WTC11 (cell line): ENCODE measurements at regions of chr15 and their contacts with region 1.

Region 1: DNA sequence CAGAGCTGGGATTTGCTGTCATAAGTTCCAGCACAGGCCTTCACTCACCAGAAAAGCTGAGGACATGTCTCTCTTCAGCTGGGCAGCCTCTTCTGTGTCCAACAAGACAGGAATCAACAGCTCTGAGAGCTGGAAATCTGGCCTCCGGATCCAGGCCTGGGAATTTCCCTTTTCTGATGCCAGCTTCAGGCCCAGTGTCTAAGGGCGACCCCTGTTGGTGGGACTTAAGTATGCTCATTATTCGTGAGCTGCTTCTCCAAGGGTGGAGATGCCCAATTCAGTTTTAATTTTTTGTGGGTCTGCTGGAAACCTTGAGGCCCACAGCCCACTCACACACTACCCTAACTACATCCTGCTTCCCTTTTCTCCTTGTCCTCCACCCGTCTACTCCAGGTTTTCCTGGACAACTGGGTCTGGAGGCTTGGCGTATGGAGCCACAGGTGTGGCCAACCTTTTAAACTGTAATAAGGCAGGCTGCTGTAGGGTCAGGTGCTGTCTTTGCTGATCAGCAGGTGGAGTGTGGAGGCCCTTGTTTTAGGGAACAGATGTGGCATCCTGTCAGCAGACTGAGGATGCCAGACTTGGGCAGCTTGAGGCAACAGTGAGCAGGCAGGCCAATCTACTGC is 2.6 kb upstream of the CEMIP start:
- DNase-seq: peak; percentile 75
- ATAC-seq: no peak
- H3K4me3 Mint-ChIP-seq: no peak overlapping the region
- H3K27ac Mint-ChIP-seq: no peak overlapping the region
- H3K4me1 Mint-ChIP-seq: peaks cover 11% of the 10 kb centered on the region
- H3K27me3 Mint-ChIP-seq: peaks cover 39% of the 10 kb centered on the region
- CTCF ChIP-seq: peak; percentile 83

Region 2: DNA sequence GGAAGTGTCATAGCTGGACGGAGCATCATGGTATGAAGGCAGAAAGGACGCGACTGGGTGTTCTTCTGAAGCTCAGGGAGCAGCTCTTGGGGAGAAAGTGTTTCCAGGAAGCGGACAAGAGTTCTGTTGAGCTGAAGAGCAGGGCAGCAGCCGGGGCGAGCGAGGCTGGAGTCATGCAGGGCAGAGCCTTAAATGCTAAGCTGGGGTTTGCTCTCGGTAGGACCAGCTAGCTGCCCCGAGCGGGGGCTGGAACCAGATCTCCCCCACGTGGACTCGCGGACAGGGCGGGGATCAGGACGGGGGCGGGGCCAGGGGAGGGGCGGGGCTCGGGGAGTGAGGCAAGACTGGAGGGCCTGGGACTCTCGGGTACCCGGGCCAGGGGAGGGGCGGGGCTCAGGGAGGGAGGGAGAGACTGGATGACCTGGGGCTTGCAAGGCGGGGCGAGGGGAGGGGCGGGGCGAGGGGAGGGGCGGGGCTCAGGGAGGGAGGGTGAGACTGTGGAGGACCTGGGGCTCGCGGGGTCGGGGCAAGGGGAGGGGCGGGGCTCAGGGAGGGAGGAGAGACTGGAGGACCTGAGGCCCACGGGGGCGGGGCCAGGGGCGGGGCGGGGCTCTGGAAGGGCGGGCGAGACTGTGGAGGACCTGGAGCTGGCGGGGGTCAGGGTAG is 624.2 kb before region 1 on chr15:
- CTCF ChIA-PET with region 1: no interaction called
- POLR2A ChIA-PET with region 1: no interaction called
- DNase-seq: peak; percentile 97
- ATAC-seq: peak; percentile 82
- H3K4me3 Mint-ChIP-seq: peak overlapping the region; percentile 78
- H3K27ac Mint-ChIP-seq: peak overlapping the region; percentile 74; the same call in 1 of the 2 replicates
- H3K4me1 Mint-ChIP-seq: peaks cover 30% of the 10 kb centered on the region
- H3K27me3 Mint-ChIP-seq: peaks cover 10% of the 10 kb centered on the region
- CTCF ChIP-seq: no peak

Region 3: DNA sequence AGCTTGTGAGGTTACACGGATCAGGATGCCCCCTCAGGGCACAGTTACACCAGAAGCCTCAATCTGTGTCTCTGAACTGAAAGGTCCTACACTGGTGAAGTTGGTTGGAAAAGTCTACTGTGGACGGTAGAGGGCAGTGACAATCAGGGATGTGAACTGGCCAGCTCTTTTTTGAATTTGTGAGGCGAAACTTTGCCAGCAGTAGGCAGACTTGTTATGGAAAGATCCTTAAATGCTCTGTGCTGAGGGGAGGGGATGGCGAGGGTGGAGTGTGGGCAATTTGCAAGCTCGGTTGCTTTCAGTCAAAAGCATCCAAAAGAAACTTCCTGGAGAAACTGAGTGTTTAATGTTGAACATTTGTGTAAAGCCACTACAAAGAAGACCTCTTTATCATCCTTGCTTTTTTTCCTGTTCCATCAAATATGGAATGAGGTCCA is 208.8 kb before region 1 on chr15:
- CTCF ChIA-PET with region 1: interaction called, 143 read pairs
- POLR2A ChIA-PET with region 1: interaction called, 4 read pairs
- DNase-seq: peak; percentile 52
- ATAC-seq: peak; percentile 90
- H3K4me3 Mint-ChIP-seq: no peak overlapping the region
- H3K27ac Mint-ChIP-seq: no peak overlapping the region
- H3K4me1 Mint-ChIP-seq: peaks cover 22% of the 10 kb centered on the region
- H3K27me3 Mint-ChIP-seq: no peaks in the 10 kb centered on the region; the same call in 1 of the 2 replicates
- CTCF ChIP-seq: no peak; the same call in 1 of the 2 replicates

Region 4: GRCh38 chr15:80654299-80654698 is 122.2 kb before region 1 on chr15:
- CTCF ChIA-PET with region 1: interaction called, 129 read pairs
- POLR2A ChIA-PET with region 1: no interaction called
- DNase-seq: peak; percentile 24
- ATAC-seq: peak; percentile 43
- H3K4me3 Mint-ChIP-seq: no peak overlapping the region
- H3K27ac Mint-ChIP-seq: no peak overlapping the region
- H3K4me1 Mint-ChIP-seq: peaks cover 10% of the 10 kb centered on the region
- H3K27me3 Mint-ChIP-seq: peaks cover 5% of the 10 kb centered on the region
- CTCF ChIP-seq: no peak

Region 5: DNA sequence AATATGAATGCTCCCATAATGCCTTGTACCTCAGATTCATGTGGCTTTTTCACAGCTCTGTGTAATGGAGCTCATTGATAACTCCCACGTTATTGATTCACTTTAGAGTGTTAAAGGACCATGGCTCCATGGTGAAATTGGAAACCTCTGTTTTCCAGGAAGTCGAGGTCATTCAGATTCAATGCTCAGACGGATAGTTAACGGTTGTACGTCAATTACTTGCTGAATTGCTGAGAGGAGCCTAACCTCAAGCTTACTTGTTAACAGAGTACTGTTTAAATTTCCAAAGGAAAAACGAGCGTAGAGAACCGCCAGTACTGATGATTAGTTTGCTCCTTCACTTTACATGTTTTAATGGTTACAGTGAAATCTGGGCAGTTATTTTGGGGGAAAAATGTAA is 70.4 kb before region 1 on chr15:
- CTCF ChIA-PET with region 1: interaction called, 11 read pairs
- POLR2A ChIA-PET with region 1: no interaction called
- DNase-seq: no peak
- ATAC-seq: peak; percentile 53
- H3K4me3 Mint-ChIP-seq: peak overlapping the region; percentile 49
- H3K27ac Mint-ChIP-seq: peak overlapping the region; percentile 85
- H3K4me1 Mint-ChIP-seq: peaks cover 58% of the 10 kb centered on the region
- H3K27me3 Mint-ChIP-seq: no peaks in the 10 kb centered on the region
- CTCF ChIP-seq: no peak

Region 6: GRCh38 chr15:80856809-80857377 is 80.4 kb after region 1 on chr15:
- CTCF ChIA-PET with region 1: interaction called, 26 read pairs
- POLR2A ChIA-PET with region 1: no interaction called
- DNase-seq: peak; percentile 35
- ATAC-seq: peak; percentile 65
- H3K4me3 Mint-ChIP-seq: no peak overlapping the region
- H3K27ac Mint-ChIP-seq: no peak overlapping the region
- H3K4me1 Mint-ChIP-seq: peaks cover 4% of the 10 kb centered on the region; the same call in 1 of the 2 replicates
- H3K27me3 Mint-ChIP-seq: peaks cover 3% of the 10 kb centered on the region; the same call in 1 of the 2 replicates
- CTCF ChIP-seq: no peak

Region 7: GRCh38 chr15:80953936-80954778 is 177.6 kb after region 1 on chr15:
- CTCF ChIA-PET with region 1: interaction called, 10 read pairs
- POLR2A ChIA-PET with region 1: no interaction called
- DNase-seq: no peak
- ATAC-seq: peak; percentile 90
- H3K4me3 Mint-ChIP-seq: no peak overlapping the region
- H3K27ac Mint-ChIP-seq: peak overlapping the region; percentile 66
- H3K4me1 Mint-ChIP-seq: peaks cover 34% of the 10 kb centered on the region
- H3K27me3 Mint-ChIP-seq: no peaks in the 10 kb centered on the region
- CTCF ChIP-seq: no peak